ENCODE measurements at regions of chr4 and their contacts with region 1.

Region 1: DNA sequence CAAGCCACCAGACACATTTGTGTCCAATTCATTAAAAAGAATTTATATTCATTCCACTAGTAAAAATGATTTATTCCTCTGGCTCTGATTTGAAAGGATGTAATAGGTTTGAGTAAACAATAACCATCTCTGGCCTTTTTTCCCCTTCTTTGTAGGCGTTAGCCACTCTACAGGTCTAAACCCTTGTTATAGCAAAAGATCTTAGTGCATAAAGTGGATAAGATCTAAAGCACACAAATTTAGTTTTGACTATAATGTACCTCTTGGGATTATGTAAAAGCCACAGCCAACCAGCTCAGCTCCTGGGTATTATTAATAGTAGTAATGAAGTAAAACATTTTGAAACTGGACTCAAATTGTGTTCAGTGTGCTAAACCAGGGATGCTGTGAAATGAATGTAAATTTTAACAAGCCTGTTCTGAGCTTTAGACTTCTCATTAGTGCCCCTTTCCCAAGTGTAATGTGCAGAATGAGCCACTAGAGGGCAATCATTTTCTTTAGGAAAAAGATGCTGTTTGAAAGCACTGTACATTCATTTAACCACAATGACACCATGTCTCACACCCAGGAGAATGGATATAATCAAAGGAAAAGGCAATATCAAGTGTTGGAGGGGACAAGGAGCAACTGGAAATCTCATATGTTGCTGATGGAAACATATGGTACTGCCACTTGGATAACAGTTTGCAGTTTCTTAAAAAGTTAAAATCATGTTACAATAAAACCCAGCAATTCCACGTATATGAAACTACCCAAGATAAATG is 69.7 kb downstream of the KLHL8 start:
- DNase-seq: no peak
- ATAC-seq: peak; percentile 77
- H3K4me3 Mint-ChIP-seq: no peak overlapping the region
- H3K27ac Mint-ChIP-seq: no peak overlapping the region
- H3K4me1 Mint-ChIP-seq: no peaks in the 10 kb centered on the region
- H3K27me3 Mint-ChIP-seq: no peaks in the 10 kb centered on the region
- CTCF ChIP-seq: peak; percentile 16

Region 2: DNA sequence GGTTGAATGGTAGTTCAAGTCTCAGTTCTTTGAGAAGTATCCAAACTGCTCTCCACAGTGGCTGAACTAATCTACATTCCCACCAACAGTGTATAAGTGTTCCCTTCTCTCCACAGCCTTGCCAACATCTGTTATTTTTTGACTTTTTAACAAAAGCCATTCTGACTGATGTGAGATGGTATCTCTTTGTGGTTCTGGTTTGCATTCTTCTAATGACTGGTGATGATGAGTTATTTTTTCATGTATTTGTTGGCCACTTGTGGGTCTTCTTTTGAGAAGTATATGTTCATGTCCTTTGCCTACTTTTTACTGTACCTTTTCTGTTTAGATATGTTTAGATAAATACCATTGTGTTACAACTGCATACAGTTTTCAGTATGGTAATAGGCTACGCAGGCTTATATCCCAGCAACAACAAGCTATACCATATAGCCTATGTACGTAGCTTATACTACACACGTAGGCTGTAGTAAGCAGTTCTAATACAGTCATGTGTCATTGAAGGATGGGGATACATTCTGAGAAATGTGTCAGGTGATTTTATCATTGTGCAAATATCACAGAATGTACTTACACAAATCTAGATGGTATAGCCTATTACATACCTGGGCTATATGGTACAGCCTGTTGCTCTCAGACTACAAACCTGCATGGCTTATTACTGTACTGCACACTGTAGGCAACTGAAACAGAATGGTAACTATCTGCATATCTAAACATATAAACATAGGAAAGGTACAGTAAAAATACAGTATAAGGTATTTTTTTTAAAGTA is 41.7 kb after region 1 on chr4:
- CTCF ChIA-PET with region 1: no interaction called
- POLR2A ChIA-PET with region 1: no interaction called
- intact Hi-C with region 1: loop called (anchors 5 kb)
- DNase-seq: no peak
- ATAC-seq: no peak
- H3K4me3 Mint-ChIP-seq: no peak overlapping the region
- H3K27ac Mint-ChIP-seq: no peak overlapping the region
- H3K4me1 Mint-ChIP-seq: peaks cover 3% of the 10 kb centered on the region
- H3K27me3 Mint-ChIP-seq: no peaks in the 10 kb centered on the region
- CTCF ChIP-seq: no peak

Region 3: DNA sequence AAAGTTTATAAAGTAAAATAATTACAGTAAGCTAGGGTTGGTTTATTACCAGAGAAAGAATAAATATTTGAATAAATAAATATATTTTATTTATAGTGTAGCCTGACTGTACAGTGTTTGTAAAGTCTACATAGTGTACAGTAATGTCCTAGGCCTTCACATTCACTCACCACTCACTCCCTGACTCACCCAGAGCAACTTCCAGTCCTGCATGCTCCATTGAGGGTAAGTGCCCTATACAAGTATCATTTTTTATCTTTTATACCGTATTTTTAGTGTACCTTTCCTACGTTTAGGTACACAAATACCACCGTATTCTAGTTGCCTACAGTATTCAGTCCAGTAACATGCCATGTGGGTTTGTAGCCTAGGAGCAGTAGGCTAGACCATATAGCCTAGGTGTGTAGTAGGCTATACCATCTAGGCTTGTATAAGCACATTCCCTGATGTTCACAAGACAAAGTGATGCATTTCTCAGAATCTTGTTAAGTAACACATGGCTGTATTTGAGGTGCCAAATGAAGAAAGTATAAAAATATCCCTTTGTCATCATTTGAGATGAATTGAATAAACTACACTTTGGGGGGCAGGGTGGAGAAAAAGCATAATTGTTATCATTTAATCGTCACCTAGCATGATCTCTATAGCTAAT is 84.5 kb after region 1 on chr4:
- CTCF ChIA-PET with region 1: interaction called, 43 read pairs
- POLR2A ChIA-PET with region 1: interaction called, 3 read pairs
- intact Hi-C with region 1: loop called (anchors 1 kb)
- DNase-seq: no peak
- ATAC-seq: no peak
- H3K4me3 Mint-ChIP-seq: peak overlapping the region; percentile 80
- H3K27ac Mint-ChIP-seq: no peak overlapping the region
- H3K4me1 Mint-ChIP-seq: peaks cover 3% of the 10 kb centered on the region
- H3K27me3 Mint-ChIP-seq: peaks cover 1% of the 10 kb centered on the region
- CTCF ChIP-seq: no peak

Region 4: DNA sequence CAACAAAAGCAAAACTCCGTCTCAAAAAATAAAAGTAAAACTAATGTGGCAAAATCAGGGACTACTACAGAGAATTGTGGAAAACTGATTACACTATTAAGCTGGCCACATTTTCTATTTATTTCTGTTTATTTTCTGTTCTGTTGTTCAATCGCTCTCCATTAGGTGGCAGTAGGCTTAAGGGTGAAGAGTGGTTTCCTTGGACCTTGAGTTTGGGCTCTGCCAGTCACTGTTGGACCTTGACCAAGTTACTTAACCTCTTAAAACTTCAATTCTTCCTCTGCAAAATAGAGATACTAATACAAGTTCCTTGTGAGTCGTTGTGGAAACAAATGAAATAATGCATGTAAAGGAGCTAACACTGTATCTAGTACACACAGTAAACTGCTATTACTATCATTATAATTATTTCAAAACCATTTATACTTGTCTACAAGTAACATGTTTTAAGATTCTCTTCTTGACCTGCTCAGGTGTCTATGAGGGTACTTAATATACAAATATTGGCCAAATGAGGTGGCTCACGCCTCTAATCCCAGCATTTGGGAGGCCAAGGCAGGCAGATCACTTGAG is 225.1 kb after region 1 on chr4:
- CTCF ChIA-PET with region 1: no interaction called
- POLR2A ChIA-PET with region 1: no interaction called
- intact Hi-C with region 1: loop called (anchors 2 kb)
- DNase-seq: no peak
- ATAC-seq: peak; percentile 73
- H3K4me3 Mint-ChIP-seq: no peak overlapping the region
- H3K27ac Mint-ChIP-seq: no peak overlapping the region
- H3K4me1 Mint-ChIP-seq: peaks cover 7% of the 10 kb centered on the region
- H3K27me3 Mint-ChIP-seq: no peaks in the 10 kb centered on the region
- CTCF ChIP-seq: no peak

Measured in activated B cell treated with CpG ODN at 0.5 μM for 24 hours (primary cell).